Caco-2 (cell line): ENCODE measurements at regions of chr16 and their contacts with region 1.

Region 1: GRCh38 chr16:74034862-74035261 is 261.8 kb upstream of the PSMD7 start:
- DNase-seq: peak in 1 of 2 experiments; percentile 36
- H3K4me3 ChIP-seq: no peak overlapping the region
- H3K4me3 Mint-ChIP-seq: no peak overlapping the region
- H3K27ac Mint-ChIP-seq: no peak overlapping the region
- H3K4me1 ChIP-seq: no peaks in the 10 kb centered on the region
- H3K4me1 Mint-ChIP-seq: no peaks in the 10 kb centered on the region
- H3K27me3 ChIP-seq: 0 out of 2 replicates have a peak, but pooled peaks cover 2% of the 10 kb centered on the region
- H3K27me3 Mint-ChIP-seq: peaks cover 21% of the 10 kb centered on the region
- CTCF ChIP-seq: peak; percentile 49 to 57

Region 2: DNA sequence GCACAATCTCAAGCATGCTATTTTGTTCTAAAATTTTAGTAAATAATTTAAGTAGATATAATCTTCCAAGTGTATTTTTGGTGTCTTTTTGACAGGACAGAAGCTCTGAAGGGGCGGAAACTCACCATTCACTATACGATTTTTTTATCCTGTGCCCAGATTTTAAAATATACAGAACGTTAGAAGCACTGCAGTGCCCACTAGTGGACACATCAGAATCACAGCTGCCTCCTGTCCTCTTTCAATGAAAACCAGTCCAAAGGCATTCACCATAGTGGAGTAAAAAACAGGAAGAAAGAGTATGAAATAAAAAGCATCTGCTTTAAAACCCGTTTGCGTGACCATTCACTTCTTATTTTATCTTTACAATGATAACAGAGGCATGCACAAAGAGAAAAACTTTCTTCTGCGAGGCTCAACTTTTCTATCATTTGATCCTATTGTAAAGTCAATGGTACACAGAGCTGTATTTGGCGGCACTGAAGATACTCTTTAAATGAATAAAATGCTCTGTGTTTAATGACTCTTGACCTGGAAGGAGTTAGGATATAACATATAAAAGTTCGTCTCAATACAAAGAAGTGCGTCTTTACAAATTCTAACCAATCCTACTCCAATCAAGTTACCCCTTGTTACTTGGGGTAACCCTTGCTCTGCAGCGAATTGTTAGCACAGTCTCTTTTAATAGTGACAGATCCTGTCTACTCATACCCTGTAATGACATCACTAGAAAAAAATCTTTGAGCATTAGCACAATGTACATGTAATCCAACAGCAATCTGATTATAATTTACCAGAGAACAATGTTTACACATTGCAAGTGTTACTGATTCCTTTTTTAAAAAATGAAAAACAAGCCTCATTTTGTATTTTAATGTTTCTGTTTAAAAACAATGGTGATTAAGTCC is 78.0 kb before region 1 on chr16:
- CTCF ChIA-PET with region 1: interaction called, 8 read pairs
- POLR2A ChIA-PET with region 1: no interaction called
- intact Hi-C with region 1: loop called (anchors 2 kb)
- DNase-seq: peak; percentile 52 to 64
- H3K4me3 ChIP-seq: no peak overlapping the region
- H3K4me3 Mint-ChIP-seq: no peak overlapping the region
- H3K27ac Mint-ChIP-seq: no peak overlapping the region
- H3K4me1 ChIP-seq: no peaks in the 10 kb centered on the region
- H3K4me1 Mint-ChIP-seq: no peaks in the 10 kb centered on the region
- H3K27me3 ChIP-seq: no peaks in the 10 kb centered on the region
- H3K27me3 Mint-ChIP-seq: peaks cover 6% of the 10 kb centered on the region
- CTCF ChIP-seq: peak; percentile 83 to 96

Region 3: DNA sequence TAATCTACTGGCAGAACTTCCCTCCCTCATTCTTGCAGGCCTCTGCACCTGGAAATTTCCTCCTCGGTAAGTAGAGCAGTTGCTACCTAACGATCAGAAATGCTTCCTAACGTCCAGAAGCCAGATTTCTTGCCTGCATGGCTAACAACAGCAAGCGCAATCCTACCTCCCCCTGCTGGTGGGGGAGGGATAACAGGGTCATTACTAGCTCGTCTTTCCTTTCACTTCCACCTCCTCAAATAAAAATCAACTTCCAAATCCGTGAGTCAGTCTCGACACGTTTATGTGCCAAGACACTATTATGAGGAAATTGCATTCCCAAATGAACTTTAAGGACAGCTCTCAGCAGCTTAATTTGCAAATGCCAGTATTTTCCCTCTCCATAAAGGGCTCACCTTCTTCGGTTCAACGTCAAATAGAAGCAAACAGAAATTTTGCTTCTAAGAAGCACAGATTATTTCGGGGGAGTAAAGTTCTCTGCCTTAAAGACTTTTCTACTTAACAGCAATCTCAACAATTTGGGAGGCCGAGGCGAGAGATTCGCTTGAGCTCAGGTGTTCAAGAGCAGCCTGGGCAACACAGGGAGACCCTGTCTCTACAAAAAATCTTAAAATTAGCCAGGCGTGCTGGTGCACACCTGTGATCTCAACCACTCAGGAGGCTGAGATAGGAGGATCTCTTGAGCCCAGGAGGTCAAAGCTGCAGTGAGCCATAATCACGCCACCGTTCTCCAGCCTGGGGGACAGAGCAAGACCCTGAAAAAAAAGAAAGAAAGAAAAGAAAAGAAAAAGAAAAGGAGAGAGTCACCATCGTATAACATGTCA is 73.1 kb after region 1 on chr16:
- CTCF ChIA-PET with region 1: interaction called, 4 read pairs
- POLR2A ChIA-PET with region 1: no interaction called
- intact Hi-C with region 1: loop called (anchors 1 kb)
- DNase-seq: peak; percentile 56 to 76
- H3K4me3 ChIP-seq: no peak overlapping the region
- H3K4me3 Mint-ChIP-seq: peak overlapping the region; percentile 16
- H3K27ac Mint-ChIP-seq: no peak overlapping the region
- H3K4me1 ChIP-seq: no peaks in the 10 kb centered on the region
- H3K4me1 Mint-ChIP-seq: no peaks in the 10 kb centered on the region
- H3K27me3 ChIP-seq: no peaks in the 10 kb centered on the region
- H3K27me3 Mint-ChIP-seq: peaks cover 7% of the 10 kb centered on the region
- CTCF ChIP-seq: peak; percentile 78 to 86

Region 4: DNA sequence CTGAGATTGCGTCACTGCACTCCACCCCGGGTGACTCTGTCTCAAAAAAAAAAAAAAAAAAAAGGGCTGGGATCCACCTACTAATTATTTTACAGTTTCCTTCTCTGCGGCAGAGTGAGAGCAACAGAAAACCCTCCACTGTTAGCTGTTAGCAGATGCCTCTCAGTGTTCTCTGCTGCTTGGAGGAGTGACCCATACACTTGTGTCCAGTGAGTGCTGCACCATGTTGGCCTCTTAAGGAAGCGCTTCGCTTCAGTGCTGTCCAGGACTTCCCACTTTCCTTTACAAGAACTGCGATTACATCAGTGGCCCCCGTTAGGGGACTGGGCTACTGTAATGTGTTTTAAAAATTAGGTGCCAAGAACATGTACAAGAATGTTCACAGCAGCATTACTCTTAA is 404.8 kb after region 1 on chr16:
- CTCF ChIA-PET with region 1: no interaction called
- POLR2A ChIA-PET with region 1: interaction called, 16 read pairs
- intact Hi-C with region 1: no loop called
- DNase-seq: no peak
- H3K4me3 ChIP-seq: no peak overlapping the region
- H3K4me3 Mint-ChIP-seq: no peak overlapping the region
- H3K27ac Mint-ChIP-seq: no peak overlapping the region
- H3K4me1 ChIP-seq: no peaks in the 10 kb centered on the region
- H3K4me1 Mint-ChIP-seq: no peaks in the 10 kb centered on the region
- H3K27me3 ChIP-seq: no peaks in the 10 kb centered on the region
- H3K27me3 Mint-ChIP-seq: no peaks in the 10 kb centered on the region
- CTCF ChIP-seq: no peak